Endothelial cell of umbilical vein (primary cell): ENCODE measurements at regions of chr7 and their contacts with region 1.

Region 1: DNA sequence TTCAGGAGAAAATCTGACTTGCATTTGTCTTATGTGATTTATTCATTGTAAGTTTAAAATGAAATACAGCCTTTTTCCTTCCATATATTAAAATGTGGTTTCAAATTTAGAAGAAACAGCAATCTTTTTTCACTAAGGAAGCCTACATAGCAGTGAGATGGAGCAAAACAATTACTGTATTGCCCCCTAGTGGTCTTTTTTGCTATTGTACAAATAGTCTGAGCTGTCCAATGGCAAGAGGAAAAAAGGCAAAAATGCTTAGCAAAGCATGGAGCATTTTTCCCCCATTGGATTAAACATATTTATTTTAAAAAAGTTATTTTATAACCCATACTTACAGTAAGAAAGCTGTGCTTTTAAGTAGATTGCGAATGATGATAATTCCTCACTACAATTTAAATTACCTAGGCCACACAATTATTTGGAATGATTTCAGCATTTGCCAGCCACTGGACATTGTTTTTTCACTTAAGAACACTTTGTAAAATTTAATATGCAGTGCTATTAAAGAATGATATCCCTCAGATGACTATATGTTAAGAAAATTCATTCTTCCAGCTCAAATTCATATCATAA is 119.5 kb downstream of the CPED1 start:
- DNase-seq: peak; percentile 78
- H3K4me3 ChIP-seq: no peak overlapping the region
- H3K27ac ChIP-seq: no peak overlapping the region
- H3K4me1 ChIP-seq: no peaks in the 10 kb centered on the region
- H3K27me3 ChIP-seq: peaks cover 12 to 16% of the 10 kb centered on the region in 2 experiments
- CTCF ChIP-seq: peak; percentile 57 to 59
- POLR2A ChIP-seq: no peak

Region 2: GRCh38 chr7:120805636-120806388 is 302.2 kb before region 1 on chr7:
- CTCF ChIA-PET with region 1: interaction called, 35 read pairs
- POLR2A ChIA-PET with region 1: no interaction called
- dilution Hi-C with region 1: no loop called
- intact Hi-C with region 1: loop called (anchors 1 kb)
- DNase-seq: peak; percentile 80
- H3K4me3 ChIP-seq: no peak overlapping the region
- H3K27ac ChIP-seq: no peak overlapping the region
- H3K4me1 ChIP-seq: peaks cover 12% of the 10 kb centered on the region
- H3K27me3 ChIP-seq: no peaks in the 10 kb centered on the region
- CTCF ChIP-seq: peak; percentile 67 to 77
- POLR2A ChIP-seq: no peak

Region 3: DNA sequence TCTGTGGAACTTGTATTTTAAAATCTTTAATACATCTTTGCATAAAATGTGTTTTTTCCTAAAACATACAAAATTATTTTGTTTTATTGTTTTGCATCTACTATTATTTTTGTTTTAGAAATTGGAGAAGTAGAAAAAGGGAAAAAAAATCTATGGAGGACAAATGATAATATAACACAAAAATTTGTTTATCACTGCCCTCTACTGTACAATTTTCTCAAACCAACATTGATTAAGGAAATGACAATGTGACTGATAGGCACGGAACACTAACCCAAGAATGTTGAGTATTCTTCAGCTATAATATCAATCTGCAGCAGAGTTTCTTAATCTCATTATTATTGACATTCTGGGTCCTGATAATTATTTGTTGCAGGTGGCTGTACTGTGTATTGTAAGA is 166.9 kb before region 1 on chr7:
- CTCF ChIA-PET with region 1: interaction called, 12 read pairs
- POLR2A ChIA-PET with region 1: no interaction called
- dilution Hi-C with region 1: no loop called
- intact Hi-C with region 1: no loop called
- DNase-seq: peak; percentile 75
- H3K4me3 ChIP-seq: no peak overlapping the region
- H3K27ac ChIP-seq: peak overlapping the region; percentile 87
- H3K4me1 ChIP-seq: peaks cover 46% of the 10 kb centered on the region
- H3K27me3 ChIP-seq: no peaks in the 10 kb centered on the region
- CTCF ChIP-seq: peak in 1 of 2 donors; percentile 26
- POLR2A ChIP-seq: no peak

Region 4: DNA sequence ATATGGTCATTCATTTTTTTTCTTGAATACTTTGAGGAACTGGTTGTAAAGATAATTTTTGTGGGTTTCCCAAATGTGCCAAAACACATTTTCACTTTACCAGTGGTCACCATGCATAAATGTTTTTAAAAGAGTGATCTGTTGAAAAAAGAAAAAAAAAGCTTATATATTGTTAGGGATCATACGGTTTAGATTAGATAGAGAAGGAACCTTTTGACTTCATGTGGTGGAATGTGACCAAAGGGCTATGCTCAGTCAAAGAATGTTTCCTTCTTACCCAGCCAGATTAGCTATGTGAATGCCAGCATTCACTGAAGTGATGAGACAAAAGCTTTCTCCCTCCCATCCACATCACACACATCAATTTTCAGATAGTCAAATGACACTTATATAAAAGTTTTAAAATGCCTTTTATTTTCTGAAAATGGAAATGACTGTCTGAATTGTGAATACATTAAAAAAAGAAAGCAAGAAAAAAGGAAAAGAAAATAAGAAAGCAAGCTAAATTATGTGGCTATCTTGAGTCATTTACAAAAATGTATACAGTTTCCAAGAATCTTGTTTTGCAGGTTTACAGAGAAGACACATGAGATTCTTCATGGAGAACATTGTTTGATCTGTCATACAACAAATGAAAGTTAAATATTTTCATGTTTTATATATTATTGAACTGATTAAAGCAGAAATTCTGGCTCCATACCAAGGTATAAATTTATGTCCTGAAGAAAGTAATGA is 128.1 kb before region 1 on chr7:
- CTCF ChIA-PET with region 1: interaction called, 125 read pairs
- POLR2A ChIA-PET with region 1: no interaction called
- dilution Hi-C with region 1: no loop called
- intact Hi-C with region 1: no loop called
- DNase-seq: no peak
- H3K4me3 ChIP-seq: no peak overlapping the region
- H3K27ac ChIP-seq: no peak overlapping the region
- H3K4me1 ChIP-seq: no peaks in the 10 kb centered on the region
- H3K27me3 ChIP-seq: no peaks in the 10 kb centered on the region
- CTCF ChIP-seq: no peak
- POLR2A ChIP-seq: no peak

Region 5: DNA sequence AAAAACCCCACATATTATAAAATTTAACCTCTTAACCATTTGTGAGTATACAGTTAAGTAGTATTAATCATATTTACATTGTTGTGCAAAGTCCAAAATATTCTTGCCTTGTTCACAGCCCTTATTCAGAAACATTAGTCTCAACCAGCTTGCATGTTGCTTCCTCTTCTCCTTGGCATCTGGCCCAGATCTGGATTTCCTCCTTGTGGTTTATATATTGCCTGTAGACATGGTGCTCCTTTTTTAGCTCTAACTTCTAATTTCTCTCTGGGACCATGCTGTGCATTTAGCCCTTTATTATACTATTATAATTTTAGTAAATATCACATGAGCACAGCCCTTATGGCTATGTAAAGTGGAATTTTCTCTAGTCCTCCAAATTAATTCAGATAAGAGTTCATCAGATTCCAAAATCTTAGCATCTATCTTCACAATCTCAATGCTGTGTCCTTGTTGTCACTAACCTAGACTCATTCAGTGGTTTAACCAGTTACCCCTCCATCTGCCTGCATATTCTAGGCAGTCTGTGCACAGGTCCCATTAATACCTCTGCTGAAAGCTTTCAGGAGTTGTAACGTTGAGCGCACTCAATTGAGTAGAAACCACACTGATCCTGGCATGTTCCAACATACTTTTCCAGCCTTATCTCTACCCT is 111.6 kb before region 1 on chr7:
- CTCF ChIA-PET with region 1: interaction called, 125 read pairs
- POLR2A ChIA-PET with region 1: no interaction called
- dilution Hi-C with region 1: no loop called
- intact Hi-C with region 1: no loop called
- DNase-seq: peak; percentile 85
- H3K4me3 ChIP-seq: no peak overlapping the region
- H3K27ac ChIP-seq: no peak overlapping the region
- H3K4me1 ChIP-seq: peaks cover 6% of the 10 kb centered on the region
- H3K27me3 ChIP-seq: peaks cover under 1 to 2% of the 10 kb centered on the region in 2 experiments
- CTCF ChIP-seq: no peak
- POLR2A ChIP-seq: no peak

Region 6: GRCh38 chr7:121608785-121609184 is 500.8 kb after region 1 on chr7:
- CTCF ChIA-PET with region 1: no interaction called
- POLR2A ChIA-PET with region 1: no interaction called
- dilution Hi-C with region 1: no loop called
- intact Hi-C with region 1: no loop called
- DNase-seq: no peak
- H3K4me3 ChIP-seq: no peak overlapping the region
- H3K27ac ChIP-seq: no peak overlapping the region
- H3K4me1 ChIP-seq: no peaks in the 10 kb centered on the region
- H3K27me3 ChIP-seq: no peaks in the 10 kb centered on the region
- CTCF ChIP-seq: no peak
- POLR2A ChIP-seq: no peak